ENCODE measurements at regions of chr10 and their contacts with region 1.

Region 1: GRCh38 chr10:132516771-132517725 is 20.5 kb upstream of the INPP5A start:
- H3K4me3 ChIP-seq: peak overlapping the region; percentile 6; the same call in 1 of the 2 replicates
- H3K27ac ChIP-seq: peak overlapping the region; percentile 47; the same call in 1 of the 2 replicates
- H3K4me1 ChIP-seq: peaks cover 12% of the 10 kb centered on the region
- CTCF ChIP-seq: no peak

Region 2: GRCh38 chr10:132532783-132533560 is 15.9 kb after region 1 on chr10:
- CTCF ChIA-PET with region 1: interaction called, 7 read pairs
- POLR2A ChIA-PET with region 1: interaction called, 19 read pairs
- H3K4me3 ChIP-seq: no peak overlapping the region
- H3K27ac ChIP-seq: no peak overlapping the region
- H3K4me1 ChIP-seq: peaks cover 6% of the 10 kb centered on the region
- CTCF ChIP-seq: no peak